ENCODE measurements at regions of chr5 and their contacts with region 1.

Region 1: DNA sequence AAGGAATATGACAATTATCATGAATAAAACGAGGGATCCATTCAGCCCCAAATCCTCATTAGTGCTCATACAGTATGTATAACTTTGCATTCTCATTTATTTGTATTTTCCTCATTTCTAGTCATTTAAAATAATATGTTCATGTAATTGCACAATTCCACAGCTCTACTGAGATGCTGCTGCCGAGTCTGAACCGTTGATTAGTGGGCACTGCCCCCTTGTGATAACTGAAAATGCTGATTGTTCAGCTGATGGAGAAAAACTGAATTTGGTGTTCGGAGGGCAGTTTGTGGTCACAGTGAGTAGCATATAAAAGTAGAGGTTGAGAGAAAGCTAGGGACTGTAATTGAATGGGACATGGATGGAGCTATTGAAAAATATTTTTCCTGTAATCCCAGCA is 12.2 kb upstream of the GPR151 start:
- DNase-seq: no peak
- ATAC-seq: no peak
- H3K4me3 ChIP-seq: no peak overlapping the region
- H3K27ac ChIP-seq: no peak overlapping the region
- H3K4me1 ChIP-seq: no peaks in the 10 kb centered on the region
- H3K27me3 ChIP-seq: peaks cover 5% of the 10 kb centered on the region
- CTCF ChIP-seq: no peak
- POLR2A ChIP-seq: no peak
- RAD21 ChIP-seq: no peak

Region 2: DNA sequence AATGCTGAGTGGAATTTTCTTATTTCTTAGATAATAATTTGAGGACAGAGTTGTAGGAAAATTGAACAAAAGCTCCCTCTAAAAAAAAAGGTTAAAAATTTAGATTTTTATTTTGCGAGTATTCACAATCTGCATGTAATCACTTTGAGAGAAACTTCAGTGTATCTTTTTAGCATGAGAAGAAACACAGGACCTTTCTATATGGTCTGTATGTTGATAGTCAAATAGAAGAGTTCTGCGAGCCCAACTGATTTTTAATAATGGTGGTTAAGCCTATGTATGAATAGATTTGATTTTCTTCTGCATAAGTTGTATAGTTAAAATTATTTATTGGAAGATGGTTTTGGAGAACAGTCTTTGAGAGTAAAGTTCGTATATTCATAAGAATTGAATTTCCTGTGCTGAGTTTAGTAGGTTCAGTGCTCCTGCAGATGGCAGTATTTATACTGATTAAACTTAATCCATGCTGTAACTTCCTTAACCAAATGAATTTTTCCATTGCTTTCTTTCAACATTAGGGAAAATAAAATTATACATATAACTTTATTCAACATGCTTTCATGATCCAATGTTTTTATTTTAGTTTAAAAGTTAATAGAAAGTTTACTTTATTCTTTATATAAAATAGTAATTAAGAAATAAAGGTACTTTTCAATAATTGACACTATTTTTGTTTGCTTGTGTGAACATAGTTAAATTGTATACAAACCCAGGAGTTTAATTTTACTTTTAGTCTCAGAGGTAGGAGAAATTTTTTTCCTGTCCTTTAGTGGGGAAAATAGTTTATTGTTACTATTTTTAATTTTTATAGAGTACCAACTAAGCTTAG is 61.5 kb before region 1 on chr5:
- CTCF ChIA-PET with region 1: no interaction called
- POLR2A ChIA-PET with region 1: no interaction called
- dilution Hi-C with region 1: no loop called
- in situ Hi-C with region 1: no loop called
- intact Hi-C with region 1: loop called (anchors 1 kb)
- DNase-seq: peak; percentile 37
- ATAC-seq: peak; percentile 83
- H3K4me3 ChIP-seq: no peak overlapping the region
- H3K27ac ChIP-seq: no peak overlapping the region
- H3K4me1 ChIP-seq: no peaks in the 10 kb centered on the region
- H3K27me3 ChIP-seq: no peaks in the 10 kb centered on the region
- CTCF ChIP-seq: peak; percentile 58
- POLR2A ChIP-seq: no peak
- RAD21 ChIP-seq: no peak

Region 3: DNA sequence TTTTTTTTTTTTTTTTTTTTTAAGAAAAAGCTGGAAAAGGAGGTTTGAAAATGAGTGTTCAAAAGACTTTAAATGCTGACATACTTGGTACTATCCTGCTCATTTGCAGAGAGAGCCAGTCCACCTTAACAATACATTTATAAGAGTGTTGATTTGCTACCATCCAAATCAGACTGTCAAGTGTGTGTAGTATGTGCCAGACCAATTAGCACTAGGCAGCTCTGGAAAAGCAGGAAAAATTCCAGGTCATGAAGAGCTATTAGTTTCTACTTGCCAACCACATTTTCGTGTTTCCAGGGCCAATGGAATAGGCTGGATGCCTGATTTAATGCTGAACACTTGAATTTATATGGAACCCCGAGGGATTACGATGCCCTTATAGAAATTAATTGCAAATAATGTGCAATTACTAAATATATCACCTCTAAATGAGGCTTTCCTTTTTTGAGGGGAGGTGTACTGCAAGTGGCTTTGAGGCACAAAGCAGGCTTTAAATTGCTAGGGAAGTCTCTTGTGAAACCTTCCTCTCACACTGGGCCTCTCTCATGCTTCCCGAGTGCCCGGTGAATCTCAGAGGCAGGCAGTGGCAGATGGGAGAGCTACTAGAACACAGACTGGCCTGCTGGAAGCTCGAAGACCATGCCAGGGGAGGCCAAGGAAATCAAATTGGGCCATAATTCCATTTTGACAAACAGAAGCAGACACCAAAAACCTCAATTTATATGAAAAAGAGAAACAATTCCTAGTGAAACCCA is 171.6 kb after region 1 on chr5:
- CTCF ChIA-PET with region 1: no interaction called
- POLR2A ChIA-PET with region 1: no interaction called
- dilution Hi-C with region 1: no loop called
- in situ Hi-C with region 1: no loop called
- intact Hi-C with region 1: no loop called
- DNase-seq: no peak
- ATAC-seq: no peak
- H3K4me3 ChIP-seq: no peak overlapping the region
- H3K27ac ChIP-seq: no peak overlapping the region
- H3K4me1 ChIP-seq: no peaks in the 10 kb centered on the region
- H3K27me3 ChIP-seq: no peaks in the 10 kb centered on the region
- CTCF ChIP-seq: no peak
- POLR2A ChIP-seq: no peak
- RAD21 ChIP-seq: no peak

Region 4: DNA sequence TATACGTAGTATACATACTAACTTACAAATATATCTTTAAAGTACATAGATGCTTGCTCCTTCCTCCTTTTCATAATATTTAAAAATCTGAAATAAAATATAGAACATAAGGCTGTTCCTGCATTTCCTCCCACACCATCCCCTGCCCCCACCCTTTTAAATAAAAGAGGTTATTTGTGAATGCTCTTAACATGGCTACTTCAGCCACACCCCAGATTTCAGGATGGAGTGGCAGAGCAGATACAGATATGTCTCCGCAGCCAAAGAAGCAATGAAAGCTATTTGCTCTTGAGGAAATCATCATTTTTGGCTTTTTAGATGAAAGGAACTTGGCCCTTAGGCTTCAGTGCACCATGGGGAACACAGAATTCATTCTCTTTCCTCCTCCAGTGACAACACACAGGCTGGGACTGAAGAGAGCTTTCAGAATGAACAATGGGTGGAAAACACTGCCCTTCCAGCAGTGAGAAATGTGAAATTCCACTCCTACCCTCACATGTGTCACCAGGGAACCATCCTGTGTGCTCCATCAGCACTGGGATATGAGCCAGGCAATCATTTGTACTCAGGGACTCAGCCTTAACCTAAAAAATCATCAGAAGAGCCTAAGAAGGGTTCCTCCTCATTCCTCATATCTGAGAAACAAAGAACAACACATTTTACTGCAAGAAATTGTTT is 216.0 kb after region 1 on chr5:
- CTCF ChIA-PET with region 1: no interaction called
- POLR2A ChIA-PET with region 1: no interaction called
- dilution Hi-C with region 1: no loop called
- in situ Hi-C with region 1: no loop called
- intact Hi-C with region 1: no loop called
- DNase-seq: peak; percentile 36
- ATAC-seq: no peak
- H3K4me3 ChIP-seq: no peak overlapping the region
- H3K27ac ChIP-seq: no peak overlapping the region
- H3K4me1 ChIP-seq: no peaks in the 10 kb centered on the region
- H3K27me3 ChIP-seq: no peaks in the 10 kb centered on the region
- CTCF ChIP-seq: no peak
- POLR2A ChIP-seq: no peak
- RAD21 ChIP-seq: no peak

Measured in IMR-90 (cell line).